PC-9 (cell line): ENCODE measurements at regions of chr17 and their contacts with region 1.

Region 1: DNA sequence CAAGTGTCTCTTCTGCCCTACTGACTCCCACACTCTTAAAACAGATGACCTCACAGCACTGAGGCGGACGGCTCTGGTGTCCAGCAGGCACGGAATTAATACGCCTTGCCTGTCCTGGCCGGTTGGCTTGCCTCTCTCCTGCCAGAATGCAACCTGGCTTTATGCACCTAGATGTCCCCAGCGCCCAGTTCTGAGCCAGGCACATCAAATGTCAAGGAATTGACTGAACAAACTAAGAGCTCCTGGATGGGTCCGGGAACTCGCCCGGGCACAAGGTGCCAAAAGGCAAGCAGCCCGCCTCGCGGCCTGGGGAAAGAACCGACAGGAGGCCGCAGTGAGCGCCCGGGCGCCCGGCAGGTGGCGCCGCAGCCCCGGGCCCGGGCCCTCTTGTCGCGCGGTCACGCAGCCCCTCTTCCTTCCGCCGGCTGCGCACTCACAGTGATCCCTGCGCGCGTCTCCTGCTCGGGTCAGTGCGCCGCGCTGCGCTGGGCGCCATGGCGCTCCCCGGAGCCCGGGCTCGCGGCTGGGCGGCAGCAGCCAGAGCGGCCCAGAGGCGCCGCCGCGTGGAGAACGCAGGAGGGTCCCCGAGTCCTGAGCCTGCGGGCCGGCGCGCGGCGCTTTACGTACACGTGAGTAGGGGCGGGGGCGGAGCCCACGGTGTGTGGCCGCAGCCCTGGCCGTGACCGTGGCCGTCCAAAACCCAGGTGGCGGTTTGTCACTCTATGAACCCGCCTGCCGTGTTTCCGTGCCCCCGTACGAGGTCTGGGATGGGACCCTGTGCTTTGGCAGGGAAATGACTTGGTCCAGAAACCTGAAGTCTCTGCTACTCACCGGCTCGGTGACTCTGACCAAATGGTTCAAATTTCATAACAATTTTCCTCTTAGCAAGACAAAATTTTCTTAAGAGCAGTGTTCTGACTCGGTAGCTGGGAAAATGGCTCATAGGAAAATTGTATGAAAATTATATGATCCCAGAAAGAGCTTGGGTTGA is at the start of gene RSAD1:
- DNase-seq: peak; percentile 81 to 93
- H3K4me3 ChIP-seq: peak within 1 kb of the TSS; percentile 86
- H3K27ac ChIP-seq: peak within 1 kb of the TSS; percentile 54
- H3K4me1 ChIP-seq: peaks cover 32% of the 10 kb centered on the region
- H3K27me3 ChIP-seq: no peaks in the 10 kb centered on the region
- CTCF ChIP-seq: peak; percentile 83
- total RNA-seq, gene RSAD1: 14.8 and 15.1 TPM in 2 replicates

Region 2: DNA sequence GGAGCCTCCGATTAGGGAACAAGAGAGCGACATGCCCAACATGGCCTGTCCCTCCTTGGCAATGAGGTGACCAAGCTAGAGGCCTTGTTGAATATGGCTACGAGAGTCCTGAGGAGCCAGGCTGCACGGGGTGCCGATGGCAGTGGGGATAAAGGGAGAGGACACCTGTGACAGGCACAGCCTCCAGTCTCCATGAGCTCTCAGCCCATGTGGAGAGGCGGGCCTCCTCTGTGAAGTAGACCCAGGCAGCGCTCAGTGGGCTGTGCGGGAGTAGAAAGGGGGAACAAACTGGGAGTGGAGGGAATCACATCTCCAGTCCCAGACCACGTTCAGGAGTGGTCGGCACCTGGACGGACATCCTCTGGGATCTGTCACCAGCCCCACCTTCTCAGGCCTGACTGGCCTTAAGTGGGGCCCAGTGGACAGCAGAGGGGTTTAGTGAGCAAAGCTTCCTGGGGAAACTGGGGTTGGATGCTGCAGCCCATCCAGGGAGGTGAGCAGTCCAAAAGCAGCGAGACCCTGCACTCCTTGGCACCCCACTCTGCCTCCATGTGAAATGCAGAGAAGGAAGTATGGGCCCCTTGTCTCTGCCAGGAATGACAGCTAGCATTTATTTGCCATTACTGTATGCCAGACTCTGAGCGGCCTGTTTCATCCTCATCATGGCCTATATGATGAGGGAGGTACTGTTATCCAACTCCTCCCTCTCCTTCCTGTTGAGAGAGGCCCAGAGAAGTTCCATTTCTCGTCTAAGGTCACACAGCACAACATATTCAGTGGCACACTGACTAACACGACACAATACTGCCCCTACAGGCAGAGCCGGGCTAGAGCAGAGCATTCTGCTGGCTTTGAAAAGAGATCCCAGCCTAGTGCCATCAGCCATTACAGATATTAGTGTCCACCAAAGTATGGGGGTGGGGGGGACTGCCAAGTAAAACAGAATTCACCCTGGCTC is 208.9 kb before region 1 on chr17:
- CTCF ChIA-PET with region 1: no interaction called
- POLR2A ChIA-PET with region 1: no interaction called
- intact Hi-C with region 1: loop called (anchors 10 kb)
- DNase-seq: peak; percentile 46 to 59
- H3K4me3 ChIP-seq: no peak overlapping the region
- H3K27ac ChIP-seq: no peak overlapping the region
- H3K4me1 ChIP-seq: peaks cover 22% of the 10 kb centered on the region
- H3K27me3 ChIP-seq: no peaks in the 10 kb centered on the region; the same call in 1 of the 2 replicates
- CTCF ChIP-seq: peak; percentile 92

Region 3: DNA sequence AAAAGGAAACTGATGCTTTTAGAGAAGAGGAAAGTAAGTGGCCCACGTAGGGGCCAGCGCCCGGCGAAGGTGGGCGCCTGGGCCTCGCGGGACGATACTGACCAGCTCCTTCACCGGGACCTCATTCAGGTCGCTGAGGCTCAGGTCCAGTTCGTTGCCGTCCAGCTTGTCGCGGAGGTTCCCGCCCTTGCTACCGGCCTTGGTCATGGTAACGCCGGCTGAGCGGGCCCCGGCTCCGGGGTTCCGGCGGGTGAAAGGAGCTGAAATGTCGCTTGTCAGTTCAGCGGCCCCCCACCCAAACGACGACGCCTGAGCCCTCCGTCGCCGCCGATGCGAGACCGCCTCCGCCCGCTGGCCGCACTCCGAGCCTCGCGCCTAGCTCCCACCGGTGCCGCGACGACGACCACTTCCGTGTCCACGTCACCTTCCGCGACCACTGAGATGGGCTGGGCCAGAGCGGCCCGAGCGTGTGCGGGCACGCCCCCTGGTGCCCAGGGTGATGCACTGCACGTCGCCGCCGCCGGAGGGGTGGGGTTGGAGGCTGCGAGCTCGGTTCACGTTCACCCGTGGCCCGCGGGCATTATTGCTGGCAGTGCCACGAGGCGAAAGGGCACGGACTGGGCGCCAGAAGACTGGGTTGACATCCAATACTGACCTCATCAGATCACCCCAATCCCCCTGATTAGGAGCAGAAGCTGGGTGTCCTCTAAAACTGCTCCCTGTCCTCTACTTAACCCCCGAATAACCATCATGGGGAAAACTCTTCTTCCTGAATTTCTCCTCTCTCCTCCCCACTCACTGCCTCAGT is 81.4 kb before region 1 on chr17 and contains the start of gene LRRC59:
- CTCF ChIA-PET with region 1: interaction called, 4 read pairs
- POLR2A ChIA-PET with region 1: no interaction called
- intact Hi-C with region 1: loop called (anchors 1 kb)
- DNase-seq: peak; percentile 64 to 88
- H3K4me3 ChIP-seq: peak within 1 kb of the TSS; percentile 98
- H3K27ac ChIP-seq: peak within 1 kb of the TSS; percentile 79
- H3K4me1 ChIP-seq: peaks cover 46% of the 10 kb centered on the region
- H3K27me3 ChIP-seq: no peaks in the 10 kb centered on the region
- CTCF ChIP-seq: peak; percentile 96
- total RNA-seq, gene LRRC59: 72.9 and 102 TPM in 2 replicates

Region 4: GRCh38 chr17:50447870-50448595 is 30.7 kb before region 1 on chr17:
- CTCF ChIA-PET with region 1: no interaction called
- POLR2A ChIA-PET with region 1: no interaction called
- intact Hi-C with region 1: no loop called
- DNase-seq: peak in 1 of 2 experiments; percentile 44
- H3K4me3 ChIP-seq: no peak overlapping the region
- H3K27ac ChIP-seq: no peak overlapping the region
- H3K4me1 ChIP-seq: peaks cover 81% of the 10 kb centered on the region
- H3K27me3 ChIP-seq: no peaks in the 10 kb centered on the region
- CTCF ChIP-seq: no peak

Region 5: DNA sequence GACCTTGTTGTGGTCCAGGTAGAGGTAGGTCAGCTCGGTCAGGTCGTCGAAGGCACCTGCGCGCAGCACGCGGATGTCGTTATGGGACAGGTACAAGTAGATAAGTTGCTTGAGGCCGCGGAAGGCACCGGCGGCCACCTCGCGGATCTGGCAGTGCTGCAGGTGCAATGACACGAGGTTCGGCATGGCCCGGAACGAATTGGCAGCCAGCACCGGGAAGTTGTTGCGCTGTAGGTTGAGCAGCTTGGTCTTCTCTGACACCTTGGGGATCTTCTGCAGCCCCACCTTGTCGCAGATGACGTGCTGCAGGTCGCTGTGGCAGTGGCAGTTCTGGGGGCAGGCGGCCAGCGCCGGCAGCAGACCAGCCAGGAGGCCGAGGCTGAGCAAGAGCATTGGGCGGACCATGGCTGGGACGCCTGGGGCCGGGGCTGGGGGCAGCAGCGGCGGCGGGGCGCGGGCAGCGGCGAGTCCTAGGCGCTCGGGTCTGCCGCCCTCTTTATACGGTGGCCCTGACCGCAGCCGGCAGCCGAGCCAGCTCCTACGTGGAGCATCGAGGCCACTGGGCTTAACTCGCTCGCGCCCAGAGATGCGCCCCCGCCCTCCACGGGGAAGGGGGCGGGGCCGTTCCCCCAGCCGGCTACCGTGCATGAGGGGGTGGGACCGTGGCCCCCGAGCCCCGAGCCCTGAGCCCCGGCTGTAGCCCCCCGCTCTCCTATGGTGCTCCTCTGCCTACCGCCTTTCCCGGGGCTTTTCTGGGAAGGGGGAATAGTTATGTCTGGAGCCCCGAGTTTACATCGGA is 10.1 kb before region 1 on chr17 and contains the start of gene CHAD:
- CTCF ChIA-PET with region 1: no interaction called
- POLR2A ChIA-PET with region 1: no interaction called
- intact Hi-C with region 1: no loop called
- DNase-seq: no peak
- H3K4me3 ChIP-seq: no peak within 1 kb of the TSS
- H3K27ac ChIP-seq: no peak within 1 kb of the TSS
- H3K4me1 ChIP-seq: 0 out of 2 replicates have a peak, but pooled peaks cover 4% of the 10 kb centered on the region
- H3K27me3 ChIP-seq: no peaks in the 10 kb centered on the region
- CTCF ChIP-seq: no peak
- total RNA-seq, gene CHAD: not detected in 2 replicates

Region 6: DNA sequence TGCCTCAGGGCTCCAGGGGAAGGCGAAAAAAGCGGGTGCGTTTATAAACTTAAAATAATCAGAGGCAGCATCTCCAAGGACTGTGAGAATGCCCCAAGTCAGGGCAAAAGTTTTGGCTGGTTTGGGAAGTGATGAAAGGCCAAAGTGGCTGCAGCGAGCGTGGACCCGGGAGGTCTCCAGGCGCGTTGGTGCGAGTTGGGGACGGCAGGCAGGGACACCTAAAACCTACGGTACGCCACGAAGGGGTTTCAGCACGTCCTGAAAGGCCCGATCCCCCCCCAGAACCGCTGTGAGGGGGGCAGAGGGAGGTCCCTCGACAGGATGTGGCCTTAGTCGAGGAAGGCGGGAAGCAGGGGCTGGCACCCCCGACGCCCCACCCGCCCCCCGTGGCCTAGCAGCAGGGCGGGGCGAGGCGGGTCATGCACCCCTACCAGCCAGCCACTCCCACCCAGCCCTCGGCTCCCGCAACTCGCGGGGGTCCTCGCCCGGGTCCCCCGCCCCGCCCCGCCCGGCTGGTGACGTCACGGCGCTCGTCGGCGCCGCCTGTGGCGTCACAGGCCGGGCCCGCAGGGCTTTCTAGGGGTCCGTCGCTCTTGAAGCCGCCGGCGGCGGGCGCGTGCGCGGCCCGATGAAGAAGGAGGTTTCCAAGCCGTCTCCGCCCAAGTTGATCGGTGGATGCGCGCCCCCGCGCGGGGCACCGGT is 29.3 kb after region 1 on chr17 and contains the start of gene MYCBPAP:
- CTCF ChIA-PET with region 1: interaction called, 13 read pairs
- POLR2A ChIA-PET with region 1: no interaction called
- intact Hi-C with region 1: no loop called
- DNase-seq: peak in 1 of 2 experiments; percentile 76
- H3K4me3 ChIP-seq: peak within 1 kb of the TSS; percentile 44; the same call in 1 of the 2 replicates
- H3K27ac ChIP-seq: no peak within 1 kb of the TSS
- H3K4me1 ChIP-seq: peaks cover 42% of the 10 kb centered on the region
- H3K27me3 ChIP-seq: no peaks in the 10 kb centered on the region
- CTCF ChIP-seq: no peak
- total RNA-seq, gene MYCBPAP: 4.9 and 11.6 TPM in 2 replicates

Region 7: GRCh38 chr17:50547035-50547735 is 68.5 kb after region 1 on chr17 and contains the start of gene SPATA20:
- CTCF ChIA-PET with region 1: no interaction called
- POLR2A ChIA-PET with region 1: no interaction called
- intact Hi-C with region 1: loop called (anchors 1 kb)
- DNase-seq: peak; percentile 82 to 89
- H3K4me3 ChIP-seq: peak within 1 kb of the TSS; percentile 68
- H3K27ac ChIP-seq: no peak within 1 kb of the TSS
- H3K4me1 ChIP-seq: peaks cover 17% of the 10 kb centered on the region
- H3K27me3 ChIP-seq: no peaks in the 10 kb centered on the region
- CTCF ChIP-seq: peak; percentile 99
- total RNA-seq, gene SPATA20: 41.5 and 60.5 TPM in 2 replicates

Region 8: GRCh38 chr17:50634133-50634916 is 155.6 kb after region 1 on chr17 and contains the start of gene ABCC3:
- CTCF ChIA-PET with region 1: no interaction called
- POLR2A ChIA-PET with region 1: no interaction called
- intact Hi-C with region 1: no loop called
- DNase-seq: peak in 1 of 2 experiments; percentile 64
- H3K4me3 ChIP-seq: peak within 1 kb of the TSS; percentile 81
- H3K27ac ChIP-seq: peak within 1 kb of the TSS; percentile 91
- H3K4me1 ChIP-seq: peaks cover 81% of the 10 kb centered on the region
- H3K27me3 ChIP-seq: no peaks in the 10 kb centered on the region
- CTCF ChIP-seq: no peak
- total RNA-seq, gene ABCC3: 221 and 273 TPM in 2 replicates

Region 9: GRCh38 chr17:50931144-50931908 is 452.6 kb after region 1 on chr17:
- CTCF ChIA-PET with region 1: interaction called, 15 read pairs
- POLR2A ChIA-PET with region 1: no interaction called
- intact Hi-C with region 1: no loop called
- DNase-seq: peak; percentile 71 to 72
- H3K4me3 ChIP-seq: peak overlapping the region; percentile 56
- H3K27ac ChIP-seq: peak overlapping the region; percentile 75
- H3K4me1 ChIP-seq: peaks cover 65% of the 10 kb centered on the region
- H3K27me3 ChIP-seq: no peaks in the 10 kb centered on the region
- CTCF ChIP-seq: no peak

Region 10: GRCh38 chr17:51335883-51336822 is 857.5 kb after region 1 on chr17:
- CTCF ChIA-PET with region 1: no interaction called
- POLR2A ChIA-PET with region 1: no interaction called
- intact Hi-C with region 1: no loop called
- DNase-seq: no peak
- H3K4me3 ChIP-seq: no peak overlapping the region
- H3K27ac ChIP-seq: no peak overlapping the region
- H3K4me1 ChIP-seq: no peaks in the 10 kb centered on the region
- H3K27me3 ChIP-seq: peaks cover 85% of the 10 kb centered on the region
- CTCF ChIP-seq: no peak